ENCODE measurements at regions of chr6 and their contacts with region 1.

Region 1: DNA sequence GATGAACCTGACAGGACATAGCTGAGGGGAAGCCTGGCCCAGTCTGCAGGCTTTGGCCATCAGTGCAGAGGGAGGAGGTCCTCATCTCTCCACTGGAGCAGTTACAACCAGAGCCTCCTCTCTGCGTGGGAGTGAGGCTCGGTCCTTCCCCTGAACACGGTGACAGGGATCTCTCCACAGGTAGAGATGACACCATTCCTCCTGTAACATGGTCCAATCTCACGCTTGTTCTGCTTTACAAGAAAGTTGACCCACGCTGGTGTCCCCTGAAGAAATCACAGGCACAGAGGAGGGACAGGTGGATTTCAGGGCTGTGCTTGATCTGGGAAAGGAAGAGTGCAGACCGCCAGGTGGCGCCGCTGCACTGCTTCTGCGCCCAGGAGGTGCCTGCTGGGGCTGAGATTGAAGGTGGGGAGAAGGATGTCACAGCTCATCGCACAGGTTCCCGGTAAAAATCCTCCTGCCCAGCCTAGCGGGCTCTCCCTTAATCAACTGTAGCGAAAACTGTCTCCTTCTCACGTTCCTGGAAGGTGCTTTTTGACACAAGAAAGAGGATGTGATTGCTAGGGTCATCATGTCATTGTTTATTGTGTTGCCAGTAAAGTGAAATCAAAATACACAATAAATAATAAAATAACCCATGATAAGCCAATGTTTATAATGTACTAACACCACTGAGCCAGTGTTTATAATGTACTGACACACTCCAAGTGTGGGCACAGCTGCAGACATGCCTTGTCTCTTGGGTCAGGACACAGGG is 20.4 kb downstream of the HLA-G start:
- DNase-seq: peak; percentile 57
- H3K4me3 ChIP-seq: no peak overlapping the region
- H3K27ac ChIP-seq: no peak overlapping the region
- H3K4me1 ChIP-seq: no peaks in the 10 kb centered on the region
- H3K27me3 ChIP-seq: peaks cover 41 to 48% of the 10 kb centered on the region in 2 experiments
- CTCF ChIP-seq: peak; percentile 87 to 92
- POLR2A ChIP-seq: no peak

Region 2: DNA sequence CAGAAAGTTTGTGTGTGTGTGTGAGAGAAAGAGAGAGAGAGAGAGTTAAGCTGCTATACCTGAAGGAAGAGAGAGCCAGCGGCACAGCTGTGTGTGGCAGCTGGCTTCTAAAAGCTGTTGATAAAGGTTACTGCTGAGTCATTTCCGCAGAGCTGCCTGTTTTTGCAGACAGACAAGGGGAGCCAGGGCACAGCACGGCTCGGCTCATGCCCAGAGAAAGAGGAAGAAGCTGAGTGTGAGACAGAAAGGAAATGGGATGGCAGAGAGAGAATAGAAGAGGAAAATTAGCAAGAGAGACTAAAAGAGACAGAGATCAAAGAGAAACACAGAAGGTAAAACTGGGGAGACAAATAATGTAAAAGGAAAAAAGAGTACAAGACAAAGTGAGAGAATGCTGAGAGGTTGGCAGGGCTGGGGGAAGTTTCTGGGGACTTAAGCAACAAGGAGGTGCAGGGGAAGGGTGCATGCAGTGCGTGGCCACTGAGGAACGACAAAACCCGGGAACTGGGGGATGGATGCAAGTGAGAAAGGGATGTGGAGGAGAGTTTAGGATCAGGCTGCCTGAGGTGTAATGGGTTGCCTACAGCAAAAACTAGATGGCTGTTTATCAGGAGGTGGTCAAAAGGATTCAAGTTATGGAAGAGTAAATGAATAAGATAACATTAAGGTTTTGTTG is 117.0 kb after region 1 on chr6:
- CTCF ChIA-PET with region 1: interaction called, 24 read pairs
- POLR2A ChIA-PET with region 1: no interaction called
- dilution Hi-C with region 1: no loop called
- intact Hi-C with region 1: no loop called
- DNase-seq: peak; percentile 94
- H3K4me3 ChIP-seq: peak overlapping the region in 2 of 3 experiments; percentile 1 to 67
- H3K27ac ChIP-seq: peak overlapping the region; percentile 94
- H3K4me1 ChIP-seq: peaks cover 44% of the 10 kb centered on the region
- H3K27me3 ChIP-seq: no peaks in the 10 kb centered on the region
- CTCF ChIP-seq: no peak
- POLR2A ChIP-seq: no peak

Region 3: DNA sequence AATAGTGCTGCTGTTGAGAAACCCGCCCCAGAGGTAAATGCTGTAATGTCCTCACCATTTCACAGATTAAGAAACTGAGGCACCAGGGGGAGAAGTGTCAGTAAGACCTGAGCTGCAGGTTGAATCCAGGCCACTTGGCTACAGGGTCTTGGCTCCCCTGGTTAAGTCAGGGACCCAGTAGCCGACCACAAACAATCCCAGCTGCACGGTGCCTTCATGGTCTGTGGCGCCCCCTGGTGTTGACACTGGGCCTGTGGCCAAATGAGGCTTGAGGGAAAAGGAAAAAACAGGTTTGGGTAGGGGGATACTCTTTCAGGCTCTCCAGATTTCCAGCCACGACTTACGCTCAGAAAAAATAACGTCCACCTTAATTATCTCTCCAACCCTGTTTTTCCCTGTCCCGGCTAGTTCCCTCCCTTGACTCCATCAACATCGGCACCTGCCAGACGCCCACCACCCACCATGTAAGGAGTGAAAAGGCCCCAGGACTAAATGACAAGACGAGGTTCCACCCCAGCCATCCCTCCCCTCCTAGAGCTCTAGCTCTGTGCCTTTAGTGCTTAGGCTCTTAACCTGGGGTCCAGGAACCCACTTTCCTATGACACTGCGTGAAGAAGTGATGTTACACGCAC is 165.4 kb after region 1 on chr6:
- CTCF ChIA-PET with region 1: interaction called, 88 read pairs
- POLR2A ChIA-PET with region 1: no interaction called
- dilution Hi-C with region 1: no loop called
- intact Hi-C with region 1: loop called (anchors 1 kb)
- DNase-seq: peak; percentile 26
- H3K4me3 ChIP-seq: no peak overlapping the region
- H3K27ac ChIP-seq: no peak overlapping the region
- H3K4me1 ChIP-seq: no peaks in the 10 kb centered on the region
- H3K27me3 ChIP-seq: peaks cover 4% of the 10 kb centered on the region in 2 experiments
- CTCF ChIP-seq: peak; percentile 65 to 89
- POLR2A ChIP-seq: no peak

Region 4: DNA sequence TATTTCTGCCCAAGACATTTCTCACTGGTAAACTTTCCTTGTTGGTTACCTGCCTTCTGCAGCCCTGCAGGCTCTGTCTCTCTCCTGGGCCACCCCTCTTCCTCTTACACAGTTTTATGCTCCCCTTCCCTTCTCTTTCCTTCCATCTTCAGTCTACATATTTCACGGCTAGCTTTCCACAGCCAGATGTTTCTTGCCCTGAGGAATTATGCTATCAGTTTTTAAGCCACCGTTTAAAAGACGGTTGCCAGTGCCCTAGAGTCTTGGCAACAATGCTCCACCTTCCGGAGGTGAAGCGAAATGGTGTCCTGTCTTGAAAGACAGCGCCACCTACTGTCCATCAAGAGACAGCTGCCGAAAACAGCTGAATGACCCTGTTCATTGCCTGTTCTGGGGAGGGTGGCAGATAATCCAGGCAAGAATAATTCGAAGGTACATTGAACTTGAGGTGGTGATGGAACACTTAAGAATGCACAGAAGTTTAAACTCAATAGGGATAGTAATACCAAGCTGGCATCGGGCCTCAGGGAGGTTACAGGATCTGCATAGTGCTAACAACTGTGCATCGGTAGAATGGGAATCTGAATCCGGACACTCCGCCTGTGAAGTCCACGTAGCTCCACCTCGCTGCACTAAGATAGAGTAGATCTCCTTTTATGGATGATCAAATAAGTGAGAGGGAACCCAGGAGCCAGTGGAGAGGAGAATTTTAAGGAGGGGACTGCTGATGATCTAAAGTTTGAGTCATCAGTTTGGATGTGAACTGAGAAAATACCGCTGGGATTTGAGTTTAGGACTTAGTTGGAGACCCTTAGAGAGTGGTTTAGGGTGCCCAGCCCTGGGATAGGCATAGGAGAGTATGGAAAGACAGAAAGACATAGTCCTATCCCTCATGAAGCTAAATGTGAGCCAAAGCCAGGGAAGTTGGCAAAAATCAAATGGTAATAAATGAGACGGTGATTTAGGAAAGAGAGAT is 283.1 kb after region 1 on chr6:
- CTCF ChIA-PET with region 1: interaction called, 32 read pairs
- POLR2A ChIA-PET with region 1: no interaction called
- dilution Hi-C with region 1: no loop called
- intact Hi-C with region 1: loop called (anchors 1 kb)
- DNase-seq: peak; percentile 57
- H3K4me3 ChIP-seq: no peak overlapping the region
- H3K27ac ChIP-seq: no peak overlapping the region
- H3K4me1 ChIP-seq: no peaks in the 10 kb centered on the region
- H3K27me3 ChIP-seq: peaks cover 49 to 74% of the 10 kb centered on the region in 2 experiments
- CTCF ChIP-seq: peak; percentile 95
- POLR2A ChIP-seq: no peak